ENCODE measurements at regions of chrX and their contacts with region 1.

Region 1: GRCh38 chrX:71475785-71476540 is 56.9 kb upstream of the OGT start:
- DNase-seq: no peak
- ATAC-seq: no peak
- H3K4me3 ChIP-seq: no peak overlapping the region
- H3K27ac ChIP-seq: no peak overlapping the region
- H3K4me1 ChIP-seq: no peaks in the 10 kb centered on the region
- H3K27me3 ChIP-seq: no peaks in the 10 kb centered on the region

Region 2: DNA sequence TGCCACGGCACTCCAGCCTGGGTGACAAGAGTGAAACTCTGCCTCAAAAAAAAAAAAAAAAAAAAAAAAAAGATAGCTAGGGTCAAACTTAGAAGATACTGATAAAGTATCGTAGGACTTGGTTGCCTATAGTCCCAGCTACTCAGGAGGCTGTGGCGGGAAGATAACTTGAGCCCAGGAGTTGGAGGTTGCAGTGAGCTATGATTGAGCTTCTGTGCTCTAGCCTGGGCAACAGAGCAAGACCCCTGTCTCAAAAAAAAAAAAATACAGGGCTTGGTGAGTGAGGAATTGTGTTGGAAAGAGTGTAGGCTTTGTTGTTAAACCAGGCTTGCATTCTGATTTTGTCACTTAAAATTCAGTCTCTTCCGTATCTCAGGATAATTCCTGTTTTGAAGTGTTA is 103.6 kb before region 1 on chrX:
- intact Hi-C with region 1: no loop called
- DNase-seq: no peak
- ATAC-seq: no peak
- H3K4me3 ChIP-seq: no peak overlapping the region
- H3K27ac ChIP-seq: no peak overlapping the region
- H3K4me1 ChIP-seq: no peaks in the 10 kb centered on the region
- H3K27me3 ChIP-seq: no peaks in the 10 kb centered on the region

Region 3: DNA sequence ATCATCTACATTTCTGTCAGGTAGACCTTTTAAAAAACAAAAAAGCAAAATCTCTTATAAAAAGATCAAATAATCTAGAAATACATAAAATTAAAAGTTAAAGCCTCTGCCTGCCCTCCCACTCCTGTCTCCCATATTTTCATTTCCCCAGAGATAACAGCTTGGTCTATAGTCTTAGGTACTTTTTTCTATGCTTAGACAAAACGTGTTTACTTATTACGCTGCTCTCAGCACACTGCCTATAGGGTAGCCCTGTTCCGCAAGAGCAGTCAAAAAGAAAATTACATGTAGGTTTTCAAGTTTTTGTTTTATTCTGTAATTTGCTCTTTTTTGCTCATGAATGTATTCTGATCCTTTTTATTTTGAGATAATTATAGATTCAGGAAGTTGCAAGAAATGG is 36.5 kb before region 1 on chrX:
- intact Hi-C with region 1: no loop called
- DNase-seq: no peak
- ATAC-seq: no peak
- H3K4me3 ChIP-seq: no peak overlapping the region
- H3K27ac ChIP-seq: no peak overlapping the region
- H3K4me1 ChIP-seq: no peaks in the 10 kb centered on the region
- H3K27me3 ChIP-seq: no peaks in the 10 kb centered on the region

Region 4: GRCh38 chrX:71541210-71542022 is 65.5 kb after region 1 on chrX:
- intact Hi-C with region 1: loop called in 1 of 4 experiments (anchors 10 kb)
- DNase-seq: no peak
- ATAC-seq: peak in 1 of 2 donors; percentile 29
- H3K4me3 ChIP-seq: peak overlapping the region; percentile 28
- H3K27ac ChIP-seq: no peak overlapping the region
- H3K4me1 ChIP-seq: peaks cover 7% of the 10 kb centered on the region
- H3K27me3 ChIP-seq: no peaks in the 10 kb centered on the region